Ovary (tissue), 10 donors: ENCODE measurements at regions of chr21 and their contacts with region 1.

Region 1: DNA sequence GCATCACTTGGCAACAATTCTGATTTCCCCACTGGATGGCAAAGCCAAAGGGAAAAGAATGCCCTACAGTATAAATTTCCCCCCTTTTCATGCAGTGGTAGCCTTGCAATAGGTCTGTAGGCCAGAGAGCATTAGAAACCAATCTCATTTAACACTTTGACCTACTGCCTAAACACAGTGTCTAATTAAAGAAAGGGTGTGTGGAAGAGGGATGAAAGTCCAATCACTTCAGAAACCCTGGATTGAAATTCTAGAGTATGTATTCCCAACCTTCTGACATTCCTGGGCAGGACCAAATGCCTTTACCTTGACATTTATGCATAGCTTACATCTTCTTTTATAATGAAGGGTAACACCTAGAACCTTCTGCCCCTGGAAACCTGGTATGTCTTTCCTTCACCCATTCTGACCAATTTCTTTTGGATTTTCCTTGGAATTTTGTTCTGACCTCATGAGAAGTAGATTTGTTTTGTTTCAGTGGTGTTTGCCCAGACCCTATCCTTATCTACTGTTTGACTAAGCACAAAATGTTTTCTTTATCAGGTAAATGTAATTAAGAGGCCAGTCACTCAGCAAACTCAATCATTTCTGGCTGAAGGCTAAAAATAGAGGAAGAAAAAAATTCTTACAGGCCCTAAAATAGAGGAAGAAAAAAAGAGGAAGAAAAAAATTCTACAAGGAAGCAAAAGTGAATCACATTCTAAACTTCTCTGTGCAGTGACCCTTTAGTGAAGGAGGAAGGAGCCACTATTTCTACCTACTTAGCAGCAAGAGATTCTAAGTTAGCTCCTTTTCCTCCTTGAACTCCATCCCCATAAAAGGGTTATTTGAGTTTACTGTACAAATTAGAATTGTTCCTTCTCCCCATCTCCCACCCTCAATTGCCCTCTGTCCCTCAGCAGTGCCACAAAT is 129.5 kb upstream of the DSCAM start:
- DNase-seq: no peak
- H3K4me3 ChIP-seq: no peak overlapping the region
- H3K27ac ChIP-seq: no peak overlapping the region
- H3K4me1 ChIP-seq: no peaks in the 10 kb centered on the region
- H3K27me3 ChIP-seq: no peaks in the 10 kb centered on the region
- CTCF ChIP-seq: no peak
- EP300 ChIP-seq: no peak
- POLR2A ChIP-seq: no peak

Region 2: DNA sequence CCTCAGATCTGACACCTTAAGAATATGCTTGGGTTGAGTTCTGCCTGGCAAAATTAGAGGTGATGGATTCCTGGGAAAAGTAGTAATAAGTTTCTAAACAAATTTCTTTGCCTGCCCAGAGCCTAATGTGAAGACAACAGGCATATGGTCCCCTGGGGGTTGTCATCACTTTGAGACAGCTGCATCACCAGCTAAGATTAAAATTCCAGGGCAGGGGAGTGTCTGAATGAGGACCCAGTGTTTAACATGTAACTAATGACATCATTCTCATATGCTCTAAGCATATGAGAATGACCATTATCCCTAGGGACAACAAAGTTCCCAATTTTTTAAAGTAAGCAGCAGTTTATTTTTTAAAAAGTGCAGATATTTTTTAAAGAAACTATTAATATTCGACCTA is 677.0 kb before region 1 on chr21:
- intact Hi-C with region 1: no loop called
- DNase-seq: no peak
- H3K4me3 ChIP-seq: no peak overlapping the region
- H3K27ac ChIP-seq: no peak overlapping the region
- H3K4me1 ChIP-seq: no peaks in the 10 kb centered on the region
- H3K27me3 ChIP-seq: no peaks in the 10 kb centered on the region
- CTCF ChIP-seq: no peak
- EP300 ChIP-seq: no peak
- POLR2A ChIP-seq: no peak

Region 3: DNA sequence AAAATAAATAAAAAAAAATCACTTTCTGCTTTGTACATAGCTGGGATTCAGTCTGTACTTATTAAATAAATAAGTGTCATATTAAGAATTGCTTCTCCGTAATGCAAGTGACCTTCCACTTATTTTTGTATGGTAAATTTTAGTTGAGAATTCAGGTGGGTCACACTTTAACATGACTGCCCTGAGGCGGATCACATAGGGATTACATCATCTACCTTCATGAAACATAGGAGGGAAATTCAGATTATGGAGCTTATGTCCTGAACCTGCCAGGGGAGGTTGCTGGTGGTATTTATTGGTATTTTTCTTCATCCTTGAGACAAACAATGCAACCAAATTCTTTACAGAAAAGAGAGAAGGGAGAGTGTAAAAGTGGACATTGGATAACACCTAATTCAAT is 193.7 kb before region 1 on chr21:
- intact Hi-C with region 1: no loop called
- DNase-seq: no peak
- H3K4me3 ChIP-seq: no peak overlapping the region
- H3K27ac ChIP-seq: no peak overlapping the region
- H3K4me1 ChIP-seq: no peaks in the 10 kb centered on the region
- H3K27me3 ChIP-seq: no peaks in the 10 kb centered on the region
- CTCF ChIP-seq: no peak
- EP300 ChIP-seq: no peak
- POLR2A ChIP-seq: no peak

Region 4: DNA sequence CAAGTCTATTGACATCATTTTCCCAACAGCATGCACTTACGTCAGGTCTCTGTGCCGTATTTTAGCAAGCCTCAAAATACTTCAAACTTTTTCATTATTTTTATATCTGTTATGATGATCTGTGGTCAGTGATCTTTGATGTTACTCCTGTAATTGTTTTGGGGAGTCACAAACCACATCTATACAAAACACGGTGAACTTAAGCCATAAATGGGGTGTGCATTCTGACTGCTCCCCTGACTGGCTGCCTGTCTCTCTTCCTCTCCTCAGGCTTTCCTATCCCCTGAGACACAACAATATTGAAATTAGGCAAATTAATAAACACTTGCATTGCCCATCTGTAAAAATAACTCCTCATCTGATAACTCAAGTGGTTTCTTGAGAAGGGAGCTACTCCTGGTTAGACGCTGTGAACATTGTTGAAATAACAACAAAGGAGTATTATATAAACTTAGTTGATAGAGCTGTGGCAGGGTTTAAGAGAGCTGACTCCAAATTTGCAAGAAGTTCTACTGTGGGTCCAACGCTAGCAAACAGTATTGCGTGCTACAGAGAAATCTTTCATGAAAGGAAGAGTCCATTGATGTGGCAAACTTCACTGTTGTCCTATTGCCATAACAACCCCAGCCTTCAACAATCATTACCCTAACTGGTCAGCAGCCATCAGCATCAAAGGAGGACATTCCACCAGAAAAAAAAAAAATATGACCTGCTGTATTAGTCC is 23.7 kb before region 1 on chr21:
- intact Hi-C with region 1: loop called in 1 of 4 experiments (anchors 1 kb)
- DNase-seq: no peak
- H3K4me3 ChIP-seq: no peak overlapping the region
- H3K27ac ChIP-seq: no peak overlapping the region
- H3K4me1 ChIP-seq: no peaks in the 10 kb centered on the region
- H3K27me3 ChIP-seq: no peaks in the 10 kb centered on the region
- CTCF ChIP-seq: no peak
- EP300 ChIP-seq: no peak
- POLR2A ChIP-seq: no peak